ENCODE measurements at regions of chr4 and their contacts with region 1.

Region 1: DNA sequence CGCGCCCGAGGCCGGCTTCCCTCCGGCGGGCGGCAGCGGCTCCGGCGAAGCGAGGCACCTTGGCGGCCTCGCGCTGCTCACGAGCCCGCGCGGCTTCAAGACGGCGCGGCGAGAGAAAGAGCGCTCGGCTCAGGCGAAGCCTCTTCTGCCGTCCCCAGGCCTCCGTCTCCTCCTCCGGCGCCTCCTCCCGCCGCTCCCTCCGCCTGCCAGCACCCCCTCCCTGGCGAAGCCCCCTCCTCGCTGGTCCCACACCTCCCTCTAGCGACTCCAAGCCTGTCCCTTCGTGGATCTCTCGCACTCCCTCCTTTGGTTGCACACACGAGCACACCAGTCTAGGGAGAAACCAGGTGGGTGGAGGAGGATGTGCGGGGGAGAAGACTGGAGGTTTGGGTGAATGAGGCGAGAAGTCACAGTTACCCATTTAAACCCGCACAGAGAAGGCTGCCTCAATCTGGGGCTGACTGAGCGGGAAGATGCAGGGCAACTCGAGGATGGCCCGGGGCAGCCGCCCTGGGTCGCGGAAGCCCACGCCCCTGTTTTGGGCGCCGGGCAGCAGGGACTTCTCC is at the start of gene CAMK2D:
- DNase-seq: peak; percentile 82 to 92
- H3K4me3 ChIP-seq: peak within 1 kb of the TSS; percentile 62
- H3K4me1 ChIP-seq: peaks cover 23% of the 10 kb centered on the region
- H3K27me3 ChIP-seq: no peaks in the 10 kb centered on the region

Region 2: GRCh38 chr4:113555868-113556267 is 205.8 kb before region 1 on chr4:
- in situ Hi-C with region 1: loop called (anchors 10 kb)
- DNase-seq: no peak
- H3K4me3 ChIP-seq: no peak overlapping the region
- H3K4me1 ChIP-seq: no peaks in the 10 kb centered on the region
- H3K27me3 ChIP-seq: no peaks in the 10 kb centered on the region

Measured in HAP-1 (cell line).